ENCODE measurements at regions of chr15 and their contacts with region 1.

Region 1: DNA sequence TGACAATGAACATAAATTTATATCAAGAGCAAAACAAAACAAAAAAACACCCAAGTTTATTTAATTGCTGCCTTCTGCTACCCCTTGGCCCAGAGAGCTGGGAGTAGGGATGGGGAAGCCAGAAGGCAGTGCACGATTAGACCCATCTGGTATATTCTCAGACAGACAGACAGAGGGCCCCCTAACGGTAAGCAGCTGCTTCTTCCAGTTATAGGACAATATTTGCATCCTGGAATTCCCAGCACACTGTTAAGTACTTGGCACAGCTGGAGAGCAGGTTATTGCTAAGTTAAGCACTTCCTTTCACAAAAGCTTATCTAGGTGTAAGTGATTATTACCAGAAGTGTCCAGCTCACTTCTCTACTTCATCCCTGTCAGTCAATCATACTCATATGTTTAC is 39.3 kb downstream of the C2CD4B start:
- DNase-seq: no peak
- H3K4me3 Mint-ChIP-seq: no peak overlapping the region
- H3K27ac Mint-ChIP-seq: no peak overlapping the region
- H3K4me1 Mint-ChIP-seq: peaks cover 44% of the 10 kb centered on the region
- H3K27me3 Mint-ChIP-seq: no peaks in the 10 kb centered on the region

Region 2: DNA sequence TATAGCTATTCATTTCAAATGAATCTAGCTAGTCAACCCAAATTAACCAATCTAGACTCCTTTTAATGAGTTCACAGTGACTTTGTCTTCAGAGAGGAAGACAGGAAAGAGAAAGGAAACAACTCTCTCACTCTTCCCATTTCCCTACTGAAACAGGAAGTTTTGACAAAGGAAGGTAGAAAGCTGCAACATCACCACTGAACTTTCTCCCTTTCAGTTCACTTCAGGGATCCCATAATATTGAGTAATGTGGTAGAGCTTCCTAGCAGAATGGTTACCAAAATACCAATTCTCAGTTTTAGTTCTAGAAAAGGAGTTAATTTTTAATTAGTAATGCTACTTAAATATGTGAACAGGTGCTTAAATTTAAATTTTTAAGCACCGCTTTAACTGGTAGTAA is 73.1 kb before region 1 on chr15:
- CTCF ChIA-PET with region 1: no interaction called
- intact Hi-C with region 1: no loop called
- DNase-seq: no peak
- H3K4me3 Mint-ChIP-seq: no peak overlapping the region
- H3K27ac Mint-ChIP-seq: no peak overlapping the region
- H3K4me1 Mint-ChIP-seq: peaks cover 41% of the 10 kb centered on the region
- H3K27me3 Mint-ChIP-seq: no peaks in the 10 kb centered on the region

Region 3: GRCh38 chr15:62109982-62110851 is 15.6 kb before region 1 on chr15:
- CTCF ChIA-PET with region 1: no interaction called
- intact Hi-C with region 1: loop called (anchors 2 kb)
- DNase-seq: no peak
- H3K4me3 Mint-ChIP-seq: no peak overlapping the region
- H3K27ac Mint-ChIP-seq: peak overlapping the region; percentile 57
- H3K4me1 Mint-ChIP-seq: peaks cover 16% of the 10 kb centered on the region
- H3K27me3 Mint-ChIP-seq: peaks cover 12% of the 10 kb centered on the region

Region 4: GRCh38 chr15:62142731-62143130 is 17.0 kb after region 1 on chr15:
- CTCF ChIA-PET with region 1: interaction called, 12 read pairs
- intact Hi-C with region 1: no loop called
- DNase-seq: no peak
- H3K4me3 Mint-ChIP-seq: no peak overlapping the region
- H3K27ac Mint-ChIP-seq: no peak overlapping the region
- H3K4me1 Mint-ChIP-seq: no peaks in the 10 kb centered on the region
- H3K27me3 Mint-ChIP-seq: peaks cover 2% of the 10 kb centered on the region

Region 5: GRCh38 chr15:62254137-62254934 is 128.6 kb after region 1 on chr15:
- CTCF ChIA-PET with region 1: interaction called, 4 read pairs
- intact Hi-C with region 1: loop called (anchors 2 kb)
- DNase-seq: peak; percentile 79
- H3K4me3 Mint-ChIP-seq: no peak overlapping the region
- H3K27ac Mint-ChIP-seq: no peak overlapping the region
- H3K4me1 Mint-ChIP-seq: no peaks in the 10 kb centered on the region
- H3K27me3 Mint-ChIP-seq: peaks cover 12% of the 10 kb centered on the region

Region 6: GRCh38 chr15:62378772-62379498 is 253.2 kb after region 1 on chr15:
- CTCF ChIA-PET with region 1: no interaction called
- intact Hi-C with region 1: no loop called
- DNase-seq: no peak
- H3K4me3 Mint-ChIP-seq: no peak overlapping the region
- H3K27ac Mint-ChIP-seq: no peak overlapping the region
- H3K4me1 Mint-ChIP-seq: no peaks in the 10 kb centered on the region
- H3K27me3 Mint-ChIP-seq: peaks cover 12% of the 10 kb centered on the region